ENCODE measurements at regions of chr15 and their contacts with region 1.

Region 1: DNA sequence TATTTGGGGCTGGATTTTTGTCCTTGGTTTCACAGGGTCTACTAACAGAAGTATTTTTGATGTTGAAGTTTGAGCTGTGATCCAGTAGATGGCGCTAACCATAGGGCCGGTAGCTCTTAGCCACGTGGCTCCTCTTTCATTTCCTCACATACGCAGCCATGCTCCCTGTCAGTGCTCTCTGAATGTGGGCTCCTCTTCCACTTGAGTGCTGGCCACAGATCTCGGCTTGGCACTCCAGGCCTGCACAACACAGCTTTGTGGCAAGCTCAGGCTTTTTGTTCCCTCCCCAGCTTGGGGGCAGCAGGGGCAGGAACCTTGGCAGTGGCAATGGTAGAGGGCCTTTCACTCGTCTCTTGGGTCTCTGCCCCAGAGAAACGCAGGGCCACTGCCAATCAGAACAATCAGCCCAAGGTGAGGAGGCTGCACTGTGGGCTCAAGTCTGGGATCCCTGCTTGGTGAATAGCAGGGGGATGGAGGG is 18.6 kb upstream of the DNAAF4 start:
- DNase-seq: peak; percentile 30
- ATAC-seq: peak; percentile 73
- H3K4me3 Mint-ChIP-seq: no peak overlapping the region
- H3K27ac Mint-ChIP-seq: no peak overlapping the region
- H3K4me1 Mint-ChIP-seq: no peaks in the 10 kb centered on the region
- H3K27me3 Mint-ChIP-seq: peaks cover 27% of the 10 kb centered on the region
- CTCF ChIP-seq: peak; percentile 66

Region 2: DNA sequence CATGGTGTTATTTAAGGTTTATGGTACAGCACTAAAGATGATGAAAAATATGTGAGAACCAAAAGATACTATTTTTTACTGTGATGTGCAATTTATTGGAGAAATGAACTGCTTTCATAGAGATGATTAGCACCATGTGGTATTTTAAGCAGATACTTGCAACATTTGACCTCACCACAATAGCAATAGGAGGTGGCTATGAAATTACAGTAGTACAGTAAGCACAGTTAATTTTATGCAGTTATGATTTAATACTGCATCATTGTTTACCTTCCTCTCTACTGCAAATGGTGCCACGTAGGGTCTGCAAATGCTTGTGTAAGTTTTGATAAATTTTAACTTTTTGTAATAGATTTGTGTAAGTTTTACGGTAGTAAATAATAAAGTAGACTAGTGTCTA is 47.5 kb after region 1 on chr15:
- CTCF ChIA-PET with region 1: no interaction called
- POLR2A ChIA-PET with region 1: no interaction called
- intact Hi-C with region 1: no loop called
- DNase-seq: no peak
- ATAC-seq: no peak
- H3K4me3 Mint-ChIP-seq: no peak overlapping the region
- H3K27ac Mint-ChIP-seq: no peak overlapping the region
- H3K4me1 Mint-ChIP-seq: no peaks in the 10 kb centered on the region
- H3K27me3 Mint-ChIP-seq: peaks cover 27% of the 10 kb centered on the region
- CTCF ChIP-seq: no peak

Region 3: DNA sequence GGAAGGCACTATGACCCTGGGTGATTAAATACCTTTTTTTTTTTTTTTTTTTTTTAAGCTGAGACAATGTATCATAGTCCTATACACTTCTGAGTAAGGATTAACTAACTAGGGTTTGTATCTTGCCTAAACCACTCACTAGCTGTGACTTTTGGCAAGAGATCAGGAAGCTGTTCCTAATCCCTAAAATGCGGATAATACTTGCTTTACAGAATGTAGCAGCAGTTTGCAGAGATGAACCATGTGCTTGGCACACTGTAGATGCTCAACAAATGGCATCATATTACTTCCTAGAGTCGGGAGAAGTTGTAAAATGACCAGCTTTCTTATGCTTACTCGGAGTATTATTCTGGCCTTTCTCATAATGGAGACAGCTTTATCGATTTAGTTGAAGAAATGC is 87.1 kb after region 1 on chr15:
- CTCF ChIA-PET with region 1: no interaction called
- POLR2A ChIA-PET with region 1: no interaction called
- intact Hi-C with region 1: no loop called
- DNase-seq: no peak
- ATAC-seq: no peak
- H3K4me3 Mint-ChIP-seq: no peak overlapping the region
- H3K27ac Mint-ChIP-seq: no peak overlapping the region
- H3K4me1 Mint-ChIP-seq: no peaks in the 10 kb centered on the region
- H3K27me3 Mint-ChIP-seq: peaks cover 22% of the 10 kb centered on the region
- CTCF ChIP-seq: no peak

Region 4: GRCh38 chr15:55637086-55637485 is 110.5 kb after region 1 on chr15:
- CTCF ChIA-PET with region 1: interaction called, 9 read pairs
- POLR2A ChIA-PET with region 1: no interaction called
- intact Hi-C with region 1: loop called (anchors 2 kb)
- DNase-seq: no peak
- ATAC-seq: no peak
- H3K4me3 Mint-ChIP-seq: no peak overlapping the region
- H3K27ac Mint-ChIP-seq: no peak overlapping the region
- H3K4me1 Mint-ChIP-seq: no peaks in the 10 kb centered on the region
- H3K27me3 Mint-ChIP-seq: peaks cover 3% of the 10 kb centered on the region
- CTCF ChIP-seq: no peak

Measured in activated CD8-positive, alpha-beta T cell treated with anti-CD3 and anti-CD28 coated beads for 36 hours (primary cell).